Ascending aorta (tissue), 2 donors: ENCODE measurements at regions of chr3 and their contacts with region 1.

Region 1: GRCh38 chr3:40505599-40506462 is at the start of gene ZNF620:
- DNase-seq: peak; percentile 12 to 90
- H3K4me3 ChIP-seq: peak within 1 kb of the TSS; percentile 52 to 69
- H3K27ac ChIP-seq: peak within 1 kb of the TSS; percentile 77 to 82
- H3K4me1 ChIP-seq: peaks cover 5 to 10% of the 10 kb centered on the region in 2 donors
- H3K27me3 ChIP-seq: no peaks in the 10 kb centered on the region
- CTCF ChIP-seq: peak in 2 of 3 experiments; percentile 18 to 40
- total RNA-seq, gene ZNF620: not detected

Region 2: GRCh38 chr3:39051647-39052561 is 1453.9 kb before region 1 on chr3 and contains the starts of genes SCN11A and WDR48:
- intact Hi-C with region 1: no loop called
- DNase-seq: peak; percentile 80 to 97
- H3K4me3 ChIP-seq: peak within 1 kb of the TSS; percentile 92 to 96
- H3K27ac ChIP-seq: peak within 1 kb of the TSS; percentile 86 to 90
- H3K4me1 ChIP-seq: peaks cover 0 to 5% of the 10 kb centered on the region in 2 donors
- H3K27me3 ChIP-seq: no peaks in the 10 kb centered on the region
- CTCF ChIP-seq: no peak
- total RNA-seq, gene SCN11A: not detected
- total RNA-seq, gene WDR48: 81.0 TPM

Region 3: GRCh38 chr3:40309418-40309924 is 196.4 kb before region 1 on chr3 and contains the start of gene EIF1B:
- intact Hi-C with region 1: loop called (anchors 1 kb)
- DNase-seq: peak; percentile 92 to 99
- H3K4me3 ChIP-seq: peak within 1 kb of the TSS; percentile 74
- H3K27ac ChIP-seq: peak within 1 kb of the TSS; percentile 84 to 97
- H3K4me1 ChIP-seq: peaks cover 4 to 19% of the 10 kb centered on the region in 2 donors
- H3K27me3 ChIP-seq: no peaks in the 10 kb centered on the region
- CTCF ChIP-seq: peak; percentile 79 to 89 (median 88)
- total RNA-seq, gene EIF1B: 21.7 TPM

Region 4: GRCh38 chr3:40476478-40477470 is 29.1 kb before region 1 on chr3 and contains the start of gene ZNF619:
- intact Hi-C with region 1: loop called (anchors 2 kb)
- DNase-seq: peak in 1 of 2 donors; percentile 85
- H3K4me3 ChIP-seq: peak within 1 kb of the TSS; percentile 65 to 96
- H3K27ac ChIP-seq: peak within 1 kb of the TSS; percentile 64 to 72
- H3K4me1 ChIP-seq: peaks cover 0 to 7% of the 10 kb centered on the region in 2 donors
- H3K27me3 ChIP-seq: no peaks in the 10 kb centered on the region
- CTCF ChIP-seq: no peak
- total RNA-seq, gene ZNF619: 1.4 TPM

Region 5: GRCh38 chr3:40524568-40525285 is 18.9 kb after region 1 on chr3 and contains the start of gene ZNF621:
- intact Hi-C with region 1: loop called (anchors 1 kb)
- DNase-seq: peak; percentile 57 to 94
- H3K4me3 ChIP-seq: peak within 1 kb of the TSS; percentile 83 to 88
- H3K27ac ChIP-seq: peak within 1 kb of the TSS; percentile 79 to 91
- H3K4me1 ChIP-seq: peaks cover 0 to 7% of the 10 kb centered on the region in 2 donors
- H3K27me3 ChIP-seq: no peaks in the 10 kb centered on the region
- CTCF ChIP-seq: no peak
- total RNA-seq, gene ZNF621: 8.2 TPM